Panc1 (cell line): ENCODE measurements at regions of chr11 and their contacts with region 1.

Region 1: DNA sequence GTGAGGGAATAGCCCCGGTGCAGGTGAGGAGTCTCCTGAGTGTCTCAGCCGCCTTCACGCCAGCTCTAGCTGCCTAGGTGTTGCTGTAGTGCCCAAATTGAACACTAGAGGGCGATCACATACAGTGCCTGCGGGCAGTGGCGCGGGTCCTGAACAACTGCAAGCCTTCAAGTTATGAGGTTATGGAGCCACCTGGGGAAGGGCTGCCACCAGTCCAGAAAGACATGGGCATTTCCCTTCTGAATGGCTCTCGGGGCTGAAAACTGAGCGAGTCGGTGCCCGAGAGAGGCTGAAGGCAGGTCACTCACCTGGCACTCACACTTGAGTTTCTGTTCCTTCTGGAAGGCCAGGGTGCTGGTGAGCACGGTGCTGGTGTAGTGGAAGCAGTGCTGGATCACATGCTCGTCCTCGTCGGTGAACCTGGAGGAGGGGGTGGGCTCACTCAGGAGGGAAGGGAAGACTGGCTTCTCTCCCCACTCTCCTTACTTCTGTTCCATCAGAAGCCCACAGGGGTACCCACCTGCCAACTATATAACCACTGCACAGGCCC is 88.4 kb downstream of the PDE2A start:
- DNase-seq: no peak
- ATAC-seq: peak; percentile 81
- H3K4me3 ChIP-seq: peak overlapping the region in 1 of 2 experiments; percentile 3; a peak in 1 of 4 replicates
- H3K27ac ChIP-seq: no peak overlapping the region
- H3K4me1 ChIP-seq: no peaks in the 10 kb centered on the region
- H3K27me3 ChIP-seq: peaks cover 12% of the 10 kb centered on the region
- CTCF ChIP-seq: peak; percentile 99

Region 2: GRCh38 chr11:72309074-72309598 is 276.7 kb before region 1 on chr11:
- CTCF ChIA-PET with region 1: no interaction called
- POLR2A ChIA-PET with region 1: no interaction called
- in situ Hi-C with region 1: no loop called
- intact Hi-C with region 1: no loop called
- DNase-seq: no peak
- ATAC-seq: no peak
- H3K4me3 ChIP-seq: no peak overlapping the region
- H3K27ac ChIP-seq: no peak overlapping the region
- H3K4me1 ChIP-seq: no peaks in the 10 kb centered on the region
- H3K27me3 ChIP-seq: no peaks in the 10 kb centered on the region
- CTCF ChIP-seq: no peak

Region 3: GRCh38 chr11:72430741-72431570 is 154.9 kb before region 1 on chr11:
- CTCF ChIA-PET with region 1: no interaction called
- POLR2A ChIA-PET with region 1: interaction called, 10 read pairs
- in situ Hi-C with region 1: no loop called
- intact Hi-C with region 1: no loop called
- DNase-seq: no peak
- ATAC-seq: 0 out of 2 replicates have a peak, but pooled peaks have one; percentile 36
- H3K4me3 ChIP-seq: no peak overlapping the region
- H3K27ac ChIP-seq: no peak overlapping the region
- H3K4me1 ChIP-seq: peaks cover 5% of the 10 kb centered on the region
- H3K27me3 ChIP-seq: no peaks in the 10 kb centered on the region
- CTCF ChIP-seq: peak; percentile 93

Region 4: DNA sequence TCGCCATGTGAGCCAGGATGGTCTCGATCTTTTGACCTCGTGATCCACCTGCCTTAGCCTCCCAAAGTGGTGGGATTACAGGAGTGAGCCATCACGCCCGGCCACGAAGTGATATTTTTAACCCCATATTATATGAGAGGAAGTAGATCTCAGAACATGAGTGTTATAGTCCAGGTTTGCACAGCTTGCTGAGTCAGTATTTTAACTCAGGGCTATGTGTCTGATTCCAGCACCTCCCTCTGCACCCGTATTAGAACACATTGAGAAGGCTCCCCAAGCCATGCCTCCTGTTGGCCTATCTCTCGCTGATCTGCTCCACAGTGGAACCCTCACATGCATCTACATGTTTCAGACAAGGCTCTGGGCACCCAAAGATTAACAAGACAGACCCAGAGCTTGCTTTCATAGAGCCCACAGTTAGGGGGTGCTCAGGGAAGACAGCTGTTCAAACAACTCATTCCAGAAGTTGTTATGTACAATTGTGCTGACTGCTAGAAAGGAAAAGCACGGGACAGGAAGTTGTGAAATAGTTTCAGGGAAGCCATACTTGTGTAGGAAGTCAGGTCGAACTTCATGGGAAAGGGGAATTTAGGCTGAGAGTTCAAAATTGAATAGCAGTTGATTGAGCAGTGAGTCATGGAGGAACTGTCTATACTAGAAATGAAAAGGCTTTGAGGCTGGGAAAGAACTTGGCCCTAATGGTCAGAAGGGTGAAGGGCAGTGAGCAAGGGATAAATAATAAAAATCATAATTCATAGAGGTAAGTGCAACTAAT is 102.2 kb before region 1 on chr11:
- CTCF ChIA-PET with region 1: no interaction called
- POLR2A ChIA-PET with region 1: no interaction called
- in situ Hi-C with region 1: no loop called
- intact Hi-C with region 1: loop called (anchors 5 kb)
- DNase-seq: peak; percentile 10
- ATAC-seq: no peak
- H3K4me3 ChIP-seq: no peak overlapping the region
- H3K27ac ChIP-seq: no peak overlapping the region
- H3K4me1 ChIP-seq: no peaks in the 10 kb centered on the region
- H3K27me3 ChIP-seq: peaks cover 23% of the 10 kb centered on the region
- CTCF ChIP-seq: no peak

Region 5: GRCh38 chr11:72642884-72643511 is 57.2 kb after region 1 on chr11:
- CTCF ChIA-PET with region 1: interaction called, 6 read pairs
- POLR2A ChIA-PET with region 1: no interaction called
- in situ Hi-C with region 1: no loop called
- intact Hi-C with region 1: loop called (anchors 2 kb)
- DNase-seq: peak; percentile 48
- ATAC-seq: peak; percentile 85
- H3K4me3 ChIP-seq: peak overlapping the region; percentile 37 to 50
- H3K27ac ChIP-seq: peak overlapping the region; percentile 40
- H3K4me1 ChIP-seq: peaks cover 6% of the 10 kb centered on the region; the same call in 1 of the 2 replicates
- H3K27me3 ChIP-seq: peaks cover 13% of the 10 kb centered on the region
- CTCF ChIP-seq: peak; percentile 99

Region 6: DNA sequence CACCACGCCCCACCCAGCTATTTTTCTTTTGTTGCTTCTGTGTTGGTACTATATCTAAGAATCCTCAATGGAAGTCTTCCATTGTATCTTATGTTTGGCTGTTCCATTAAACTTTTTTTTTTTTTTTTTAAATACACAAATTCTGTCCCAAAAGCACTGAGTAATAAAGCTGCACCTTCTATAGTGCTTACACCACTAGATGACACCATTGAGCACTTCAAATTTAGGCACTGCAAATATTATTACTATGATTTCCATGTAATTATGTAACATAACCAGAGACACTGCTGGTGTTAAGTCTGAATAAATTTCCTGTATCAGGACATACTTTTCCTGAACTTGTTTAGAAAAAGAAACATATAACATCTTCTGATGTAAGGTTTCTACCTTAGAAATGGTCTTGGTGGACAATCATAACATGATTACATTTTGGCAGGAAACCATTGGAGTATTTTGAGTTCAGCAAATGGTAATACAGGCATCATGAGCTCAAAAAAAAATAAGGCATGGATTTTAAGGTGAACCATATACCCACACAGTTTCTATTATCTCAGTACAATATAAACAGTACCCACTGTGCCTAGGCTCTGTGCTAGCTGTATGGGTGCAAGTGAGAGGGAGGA is 338.8 kb after region 1 on chr11:
- CTCF ChIA-PET with region 1: no interaction called
- POLR2A ChIA-PET with region 1: no interaction called
- in situ Hi-C with region 1: no loop called
- intact Hi-C with region 1: no loop called
- DNase-seq: peak; percentile 15
- ATAC-seq: no peak
- H3K4me3 ChIP-seq: no peak overlapping the region
- H3K27ac ChIP-seq: no peak overlapping the region
- H3K4me1 ChIP-seq: no peaks in the 10 kb centered on the region
- H3K27me3 ChIP-seq: no peaks in the 10 kb centered on the region
- CTCF ChIP-seq: peak; percentile 75

Region 7: GRCh38 chr11:73141031-73141847 is 555.4 kb after region 1 on chr11:
- CTCF ChIA-PET with region 1: interaction called, 10 read pairs
- POLR2A ChIA-PET with region 1: no interaction called
- in situ Hi-C with region 1: no loop called
- intact Hi-C with region 1: no loop called
- DNase-seq: no peak
- ATAC-seq: peak; percentile 18
- H3K4me3 ChIP-seq: peak overlapping the region; percentile 72 to 94
- H3K27ac ChIP-seq: peak overlapping the region; percentile 89
- H3K4me1 ChIP-seq: peaks cover 19% of the 10 kb centered on the region
- H3K27me3 ChIP-seq: no peaks in the 10 kb centered on the region
- CTCF ChIP-seq: no peak